ENCODE measurements at regions of chrX and their contacts with region 1.

Region 1: DNA sequence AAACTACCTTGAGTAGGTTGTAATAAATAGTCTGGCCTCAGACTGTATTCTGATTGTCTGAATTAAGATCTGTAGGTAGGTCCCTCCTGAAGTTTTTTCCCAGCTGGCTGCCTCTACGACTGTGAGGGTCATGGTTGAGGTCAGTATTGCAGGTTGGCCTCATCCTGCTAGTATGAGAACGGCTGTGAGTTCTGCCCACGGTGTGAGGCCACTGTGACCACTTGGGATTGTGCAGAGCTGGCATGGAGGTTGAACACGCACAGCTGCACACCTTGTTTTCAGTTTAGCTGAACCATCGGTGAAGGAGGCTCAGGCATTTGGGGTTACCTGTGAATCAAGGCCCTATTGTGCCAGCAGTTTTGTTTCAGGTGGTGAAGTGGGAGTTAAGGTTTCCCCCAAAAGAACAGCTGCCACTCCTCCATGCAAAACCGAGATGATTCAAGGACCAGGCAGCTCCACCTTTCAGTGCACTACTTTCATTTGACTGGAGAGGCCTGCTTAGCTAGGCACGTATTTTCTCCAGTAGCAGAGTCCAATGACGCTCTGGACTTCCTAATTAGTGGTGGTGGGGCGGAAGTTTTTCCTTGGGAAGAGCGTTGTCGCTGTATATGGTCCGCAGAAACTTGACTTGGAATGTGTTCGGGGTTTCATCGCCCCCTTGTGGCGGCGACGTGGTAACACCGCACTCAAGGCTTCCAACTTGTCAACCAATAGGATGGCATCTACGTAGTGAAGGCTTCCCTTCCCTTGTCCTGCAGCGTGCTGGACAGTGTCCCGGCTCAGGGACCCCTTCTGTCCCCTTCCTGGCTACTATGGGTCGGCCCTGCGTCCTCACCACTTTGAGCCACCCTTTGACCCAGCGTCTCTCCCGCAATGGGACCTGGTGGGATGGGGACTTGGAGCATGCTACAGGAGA is 13.8 kb downstream of the CMC4 start:
- DNase-seq: peak; percentile 48 to 69 (median 58)
- H3K4me3 ChIP-seq: peak overlapping the region in 5 of 7 experiments; percentile 30 to 72 (median 50)
- H3K27ac ChIP-seq: no peak overlapping the region
- H3K4me1 ChIP-seq: peaks cover 0 to 6% (median 2%) of the 10 kb centered on the region in 4 experiments
- H3K27me3 ChIP-seq: no peaks in the 10 kb centered on the region

Region 2: DNA sequence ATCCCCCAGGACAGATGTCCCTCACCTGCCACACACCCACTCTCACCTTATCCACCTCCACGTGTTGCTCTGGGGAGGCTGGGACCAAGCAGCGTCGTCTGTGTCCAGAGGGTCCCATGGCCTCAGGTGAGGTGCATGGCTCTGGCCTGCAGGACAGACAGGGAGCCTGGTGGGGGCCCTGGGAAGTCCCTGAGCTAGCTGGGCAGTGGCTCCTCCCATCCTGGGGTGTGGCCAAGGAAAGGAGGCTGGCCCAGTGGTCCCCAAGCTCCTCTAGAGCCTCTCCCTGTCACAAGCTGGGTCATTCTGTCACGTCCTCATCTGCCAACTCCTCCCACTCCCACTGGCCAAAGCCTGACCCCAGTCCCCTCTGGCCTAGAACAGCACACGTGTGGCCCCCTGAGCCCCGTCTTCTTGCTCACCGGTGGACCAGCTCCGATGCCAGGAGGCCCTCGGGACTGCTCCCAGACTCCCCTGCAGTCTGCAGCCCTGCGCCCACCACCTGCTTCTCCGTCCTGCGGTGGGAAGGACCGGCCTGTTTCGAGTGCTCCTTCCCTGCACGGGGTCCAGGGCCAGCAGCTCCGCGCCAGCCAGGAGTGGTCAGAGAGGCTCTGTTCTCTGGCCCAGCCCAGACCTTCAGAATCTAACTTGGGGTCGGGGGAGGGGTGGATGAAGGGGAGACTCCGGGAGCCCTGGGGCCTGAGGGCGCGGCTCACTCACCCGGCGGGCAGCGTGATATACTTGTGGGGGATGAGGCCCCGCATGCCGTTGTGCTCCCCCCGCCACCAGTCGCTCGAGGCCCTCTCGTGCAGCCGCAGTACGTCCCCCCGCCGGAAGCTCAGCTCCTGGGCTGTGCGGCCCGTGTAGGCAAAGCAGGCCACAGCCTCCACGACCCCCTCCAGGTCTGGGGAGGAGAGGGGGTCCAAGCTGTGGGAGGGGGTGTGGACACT is 1147.8 kb before region 1 on chrX:
- CTCF ChIA-PET with region 1: no interaction called
- POLR2A ChIA-PET with region 1: no interaction called
- DNase-seq: no peak
- H3K4me3 ChIP-seq: no peak overlapping the region
- H3K27ac ChIP-seq: no peak overlapping the region
- H3K4me1 ChIP-seq: peaks cover 0 to 14% (median 9%) of the 10 kb centered on the region in 4 experiments
- H3K27me3 ChIP-seq: peaks cover 0 to 15% (median 0%) of the 10 kb centered on the region in 5 experiments

Region 3: DNA sequence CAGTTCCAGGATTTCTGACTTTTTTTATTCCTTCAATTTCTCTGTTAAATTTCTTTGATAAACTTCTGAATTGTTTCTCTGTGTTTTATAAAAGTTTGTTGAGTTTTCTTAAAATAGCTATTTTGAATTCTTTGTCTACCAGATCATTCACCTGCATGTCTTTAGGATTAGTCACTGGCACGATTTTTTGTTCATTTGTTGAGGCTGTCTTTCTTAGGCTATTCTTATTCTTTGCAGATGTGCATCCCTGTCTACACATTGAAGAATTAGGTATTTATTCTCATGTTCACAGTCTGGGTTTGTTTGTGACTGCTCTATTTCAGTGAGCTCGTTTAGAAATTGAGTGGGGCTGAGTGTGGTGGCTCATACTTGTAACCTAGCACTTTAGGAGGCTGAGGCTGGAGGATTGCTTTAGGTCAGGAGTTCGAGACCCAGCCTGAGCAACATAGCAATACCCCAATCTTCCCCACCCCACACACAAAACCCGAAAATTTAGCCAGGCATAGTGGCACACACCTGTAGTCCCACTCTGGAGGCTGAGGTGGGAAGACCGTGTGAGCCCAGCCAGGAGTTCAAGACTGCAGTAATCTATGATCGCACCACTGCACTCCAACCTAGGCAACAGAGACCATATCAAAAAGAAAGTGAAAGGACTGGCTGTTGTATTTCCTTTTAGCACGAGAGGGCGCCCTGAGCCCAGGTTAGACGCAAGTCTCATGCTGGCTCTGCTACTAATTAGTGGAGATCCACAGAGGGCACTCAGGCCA is 76.6 kb before region 1 on chrX:
- CTCF ChIA-PET with region 1: interaction called, 14 read pairs
- POLR2A ChIA-PET with region 1: no interaction called
- DNase-seq: peak; percentile 60 to 80 (median 73)
- H3K4me3 ChIP-seq: peak overlapping the region; percentile 35 to 82 (median 56)
- H3K27ac ChIP-seq: peak overlapping the region in 1 of 2 experiments; percentile 71
- H3K4me1 ChIP-seq: peaks cover 0 to 4% (median 2%) of the 10 kb centered on the region in 4 experiments
- H3K27me3 ChIP-seq: no peaks in the 10 kb centered on the region

Region 4: GRCh38 chrX:154986826-154987576 is 70.1 kb before region 1 on chrX:
- CTCF ChIA-PET with region 1: interaction called, 14 read pairs
- POLR2A ChIA-PET with region 1: no interaction called
- DNase-seq: peak in 2 of 3 donors; percentile 18 to 19
- H3K4me3 ChIP-seq: no peak overlapping the region
- H3K27ac ChIP-seq: no peak overlapping the region
- H3K4me1 ChIP-seq: no peaks in the 10 kb centered on the region
- H3K27me3 ChIP-seq: peaks cover 0 to 2% (median 0%) of the 10 kb centered on the region in 5 experiments

Region 5: DNA sequence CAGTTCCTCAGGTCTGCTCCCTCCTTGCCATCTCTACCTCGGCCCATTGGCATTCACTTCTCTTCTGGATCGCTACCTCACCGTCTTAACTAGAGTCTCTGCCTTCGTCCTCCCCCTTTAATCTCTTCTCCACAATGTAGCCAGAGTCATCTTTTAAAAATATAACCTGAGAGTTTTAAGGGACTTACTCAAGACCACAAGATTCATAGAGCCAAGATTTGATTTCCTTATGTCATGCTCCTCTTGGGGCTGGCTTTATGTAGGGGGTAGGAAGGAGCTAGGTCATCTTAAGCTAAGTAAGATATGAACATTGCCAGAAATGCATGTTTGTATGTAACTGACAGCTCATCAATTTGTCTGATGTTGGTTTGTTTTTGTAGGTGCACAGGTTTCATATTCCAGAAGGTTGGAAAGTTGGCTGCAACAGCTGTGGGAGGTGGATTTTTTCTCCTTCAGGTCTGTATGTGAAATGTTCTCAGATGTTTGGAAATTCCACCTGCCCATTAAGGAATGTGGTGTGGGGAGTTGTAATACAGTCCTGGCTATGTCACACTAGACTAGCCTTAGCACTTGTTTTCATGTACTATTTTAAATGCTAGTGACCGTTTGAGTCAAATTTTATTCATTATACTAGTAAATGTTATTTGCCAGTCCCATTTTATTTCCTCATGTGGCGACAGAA is 10.9 kb before region 1 on chrX:
- CTCF ChIA-PET with region 1: no interaction called
- POLR2A ChIA-PET with region 1: no interaction called
- DNase-seq: no peak
- H3K4me3 ChIP-seq: no peak overlapping the region
- H3K27ac ChIP-seq: no peak overlapping the region
- H3K4me1 ChIP-seq: peaks cover 0 to 11% (median under 1%) of the 10 kb centered on the region in 4 experiments
- H3K27me3 ChIP-seq: no peaks in the 10 kb centered on the region